ENCODE measurements at regions of chrX and their contacts with region 1.

Region 1: GRCh38 chrX:29948653-29949052 is 266.7 kb upstream of the MAGEB2 start:
- DNase-seq: no peak
- H3K4me3 ChIP-seq: no peak overlapping the region
- H3K4me3 Mint-ChIP-seq: no peak overlapping the region
- H3K27ac Mint-ChIP-seq: no peak overlapping the region
- H3K4me1 ChIP-seq: no peaks in the 10 kb centered on the region; the same call in 1 of the 2 replicates
- H3K4me1 Mint-ChIP-seq: no peaks in the 10 kb centered on the region
- H3K27me3 ChIP-seq: no peaks in the 10 kb centered on the region
- H3K27me3 Mint-ChIP-seq: no peaks in the 10 kb centered on the region
- CTCF ChIP-seq: no peak

Region 2: GRCh38 chrX:29792335-29792734 is 156.3 kb before region 1 on chrX:
- CTCF ChIA-PET with region 1: no interaction called
- POLR2A ChIA-PET with region 1: interaction called, 17 read pairs
- intact Hi-C with region 1: no loop called
- DNase-seq: no peak
- H3K4me3 ChIP-seq: no peak overlapping the region
- H3K4me3 Mint-ChIP-seq: no peak overlapping the region
- H3K27ac Mint-ChIP-seq: no peak overlapping the region
- H3K4me1 ChIP-seq: no peaks in the 10 kb centered on the region
- H3K4me1 Mint-ChIP-seq: no peaks in the 10 kb centered on the region
- H3K27me3 ChIP-seq: no peaks in the 10 kb centered on the region
- H3K27me3 Mint-ChIP-seq: peaks cover 3% of the 10 kb centered on the region
- CTCF ChIP-seq: no peak

Region 3: GRCh38 chrX:29911673-29912072 is 37.0 kb before region 1 on chrX:
- CTCF ChIA-PET with region 1: no interaction called
- POLR2A ChIA-PET with region 1: no interaction called
- intact Hi-C with region 1: no loop called
- DNase-seq: no peak
- H3K4me3 ChIP-seq: no peak overlapping the region
- H3K4me3 Mint-ChIP-seq: no peak overlapping the region
- H3K27ac Mint-ChIP-seq: no peak overlapping the region
- H3K4me1 ChIP-seq: no peaks in the 10 kb centered on the region
- H3K4me1 Mint-ChIP-seq: no peaks in the 10 kb centered on the region
- H3K27me3 ChIP-seq: no peaks in the 10 kb centered on the region
- H3K27me3 Mint-ChIP-seq: no peaks in the 10 kb centered on the region
- CTCF ChIP-seq: no peak

Measured in Caco-2 (cell line).